Posterior cingulate gyrus (tissue), 11 donors: ENCODE measurements at regions of chr14 and their contacts with region 1.

Region 1: DNA sequence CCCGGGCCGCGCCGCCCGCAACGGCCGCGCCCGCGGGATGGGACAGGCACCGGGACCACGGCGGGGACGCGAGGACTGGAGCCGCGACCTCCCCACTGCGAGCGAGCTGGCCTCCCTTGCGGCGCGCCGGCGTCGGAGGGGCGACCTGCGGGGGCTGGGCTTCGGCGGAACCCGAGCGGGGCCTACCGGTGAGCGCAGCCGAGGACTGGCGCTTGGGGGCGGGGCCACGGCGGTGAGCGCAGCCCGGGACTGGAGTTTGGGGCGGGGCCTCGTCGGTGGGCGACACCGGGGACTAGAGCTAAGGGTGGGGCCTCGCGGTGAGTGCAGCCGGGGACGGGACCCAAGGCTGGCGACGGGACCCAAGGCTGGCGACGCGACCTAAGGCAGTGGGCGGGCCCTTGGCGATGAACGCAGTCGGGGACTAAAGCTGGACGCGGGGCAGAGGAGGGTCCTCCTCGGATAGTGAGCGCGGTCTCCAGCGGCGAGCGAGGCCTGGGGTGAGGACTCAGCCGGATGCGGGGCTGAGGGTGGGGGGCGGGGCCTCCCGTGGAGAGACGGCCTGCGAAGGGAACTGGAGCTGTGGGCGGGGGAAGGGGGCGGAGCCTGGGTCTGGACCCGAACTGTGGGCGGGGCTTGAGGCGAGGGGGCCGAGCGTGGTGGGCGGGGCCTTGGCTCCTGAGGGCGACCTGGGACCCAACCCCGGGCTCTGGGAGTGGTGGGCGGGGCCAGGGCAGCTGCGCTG is at the start of gene BRF1:
- DNase-seq: peak; percentile 95 to 99 (median 98)

Region 2: GRCh38 chr14:105240951-105241576 is 59.9 kb before region 1 on chr14:
- intact Hi-C with region 1: no loop called
- DNase-seq: peak in 3 of 10 donors; percentile 65 to 76 (median 76)

Region 3: GRCh38 chr14:105314287-105315200 is 13.6 kb after region 1 on chr14 and contains the start of gene PACS2:
- intact Hi-C with region 1: loop called (anchors 1 kb)
- DNase-seq: peak in 7 of 10 donors; percentile 45 to 95 (median 58)